ENCODE measurements at regions of chr3 and their contacts with region 1.

Region 1: DNA sequence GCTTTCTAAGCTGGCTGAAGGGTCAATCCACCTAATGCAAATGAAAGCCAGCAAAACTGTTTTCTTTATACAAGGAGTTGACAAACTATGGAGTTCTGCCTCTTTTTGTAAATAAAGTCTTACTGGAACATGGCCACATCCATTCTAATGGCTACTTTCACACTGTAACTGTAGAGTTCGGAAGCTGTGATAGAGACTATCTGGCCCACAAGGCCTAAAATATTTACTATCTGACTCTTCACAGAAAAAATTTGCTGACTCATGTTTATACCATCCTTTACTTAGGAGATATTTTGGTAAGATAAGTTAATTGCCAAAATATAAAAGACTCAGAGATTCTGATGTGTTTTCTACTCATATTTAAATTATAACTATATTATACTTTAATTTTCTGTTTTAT is 93.7 kb upstream of the GK5 start:
- DNase-seq: no peak
- ATAC-seq: peak; percentile 44; the same call in 1 of the 2 replicates
- H3K4me3 ChIP-seq: no peak overlapping the region
- H3K27ac ChIP-seq: peak overlapping the region; percentile 12; the same call in 1 of the 2 replicates
- H3K4me1 ChIP-seq: no peaks in the 10 kb centered on the region; the same call in 1 of the 2 replicates
- H3K27me3 ChIP-seq: no peaks in the 10 kb centered on the region
- CTCF ChIP-seq: no peak

Region 2: DNA sequence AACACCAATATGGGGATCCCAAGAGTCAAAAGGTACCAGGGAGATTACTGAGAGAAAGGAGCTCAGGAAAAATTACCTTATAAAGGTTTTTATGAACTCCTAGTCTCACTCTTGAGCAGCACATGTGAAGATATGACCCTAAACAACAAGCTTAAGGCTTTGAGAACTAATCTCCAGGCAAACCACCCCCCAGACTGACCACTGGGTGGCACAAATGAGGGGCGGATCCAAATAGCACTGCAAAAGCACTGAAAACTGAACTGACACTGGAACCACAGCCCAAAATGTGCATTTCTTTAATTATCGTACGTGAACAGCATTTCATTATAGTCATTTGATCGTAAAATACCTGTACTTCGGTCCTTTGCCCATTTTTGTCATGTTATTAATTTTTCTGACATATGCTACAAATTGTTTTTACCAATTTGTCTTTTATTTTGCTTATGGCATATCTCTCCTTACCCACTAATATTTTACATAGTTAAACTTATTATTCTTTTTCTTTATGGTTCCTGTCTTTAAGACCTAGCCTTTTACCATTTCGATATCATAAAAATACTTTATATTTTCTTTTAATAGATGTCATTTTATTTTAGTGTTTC is 138.2 kb before region 1 on chr3:
- CTCF ChIA-PET with region 1: no interaction called
- POLR2A ChIA-PET with region 1: interaction called, 15 read pairs
- in situ Hi-C with region 1: no loop called
- intact Hi-C with region 1: no loop called
- DNase-seq: no peak
- ATAC-seq: peak; percentile 77
- H3K4me3 ChIP-seq: no peak overlapping the region
- H3K27ac ChIP-seq: no peak overlapping the region
- H3K4me1 ChIP-seq: no peaks in the 10 kb centered on the region
- H3K27me3 ChIP-seq: no peaks in the 10 kb centered on the region
- CTCF ChIP-seq: peak; percentile 82

Measured in Panc1 (cell line).